CD8-positive, alpha-beta T cell (primary cell): ENCODE measurements at regions of chr7 and their contacts with region 1.

Region 1: GRCh38 chr7:150898475-150899011 is 46.2 kb downstream of the AOC1 start:
- DNase-seq: peak; percentile 60 to 90 (median 79)
- ATAC-seq: peak; percentile 69
- H3K4me3 ChIP-seq: no peak overlapping the region
- H3K4me3 Mint-ChIP-seq: no peak overlapping the region
- H3K27ac ChIP-seq: no peak overlapping the region
- H3K27ac Mint-ChIP-seq: no peak overlapping the region
- H3K4me1 ChIP-seq: peaks cover 7% of the 10 kb centered on the region
- H3K4me1 Mint-ChIP-seq: peaks cover 9% of the 10 kb centered on the region
- H3K27me3 ChIP-seq: peaks cover 0 to 4% of the 10 kb centered on the region in 2 experiments
- H3K27me3 Mint-ChIP-seq: peaks cover 61% of the 10 kb centered on the region
- CTCF ChIP-seq: peak; percentile 92

Region 2: DNA sequence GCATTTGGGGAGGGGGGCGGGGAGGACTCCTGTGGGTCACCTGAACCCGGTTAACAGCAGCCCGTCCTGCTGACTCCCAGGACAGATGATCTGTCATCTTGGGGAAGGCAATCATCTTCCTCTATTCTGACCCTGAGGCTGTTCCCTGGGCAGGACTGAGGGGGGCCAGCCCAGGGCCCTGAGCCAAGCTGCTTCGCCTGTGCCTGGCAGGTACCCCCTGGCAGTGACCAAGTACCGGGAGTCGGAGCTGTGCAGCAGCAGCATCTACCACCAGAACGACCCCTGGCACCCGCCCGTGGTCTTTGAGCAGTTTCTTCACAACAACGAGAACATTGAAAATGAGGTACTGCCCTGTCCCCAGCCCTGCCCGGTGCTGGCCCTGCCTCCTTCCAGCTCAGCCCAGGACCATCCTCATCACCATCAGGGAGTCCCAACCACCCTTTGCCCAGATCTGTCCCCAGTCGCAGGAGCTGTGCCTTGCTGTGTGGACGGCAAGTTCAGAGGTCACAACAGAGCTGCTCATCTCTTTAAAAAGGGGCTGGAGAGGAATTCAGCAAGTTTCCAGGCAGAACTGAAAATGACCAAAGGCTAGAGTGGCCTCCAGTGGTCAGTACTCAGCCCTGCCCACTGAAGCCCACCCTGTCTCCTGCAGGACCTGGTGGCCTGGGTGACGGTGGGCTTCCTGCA is 38.1 kb before region 1 on chr7:
- CTCF ChIA-PET with region 1: no interaction called
- POLR2A ChIA-PET with region 1: no interaction called
- intact Hi-C with region 1: no loop called
- DNase-seq: peak in 2 of 9 experiments; percentile 5 to 41
- ATAC-seq: no peak
- H3K4me3 ChIP-seq: no peak overlapping the region
- H3K4me3 Mint-ChIP-seq: no peak overlapping the region
- H3K27ac ChIP-seq: no peak overlapping the region
- H3K27ac Mint-ChIP-seq: no peak overlapping the region
- H3K4me1 ChIP-seq: no peaks in the 10 kb centered on the region
- H3K4me1 Mint-ChIP-seq: no peaks in the 10 kb centered on the region
- H3K27me3 ChIP-seq: no peaks in the 10 kb centered on the region
- H3K27me3 Mint-ChIP-seq: peaks cover 14% of the 10 kb centered on the region
- CTCF ChIP-seq: no peak

Region 3: DNA sequence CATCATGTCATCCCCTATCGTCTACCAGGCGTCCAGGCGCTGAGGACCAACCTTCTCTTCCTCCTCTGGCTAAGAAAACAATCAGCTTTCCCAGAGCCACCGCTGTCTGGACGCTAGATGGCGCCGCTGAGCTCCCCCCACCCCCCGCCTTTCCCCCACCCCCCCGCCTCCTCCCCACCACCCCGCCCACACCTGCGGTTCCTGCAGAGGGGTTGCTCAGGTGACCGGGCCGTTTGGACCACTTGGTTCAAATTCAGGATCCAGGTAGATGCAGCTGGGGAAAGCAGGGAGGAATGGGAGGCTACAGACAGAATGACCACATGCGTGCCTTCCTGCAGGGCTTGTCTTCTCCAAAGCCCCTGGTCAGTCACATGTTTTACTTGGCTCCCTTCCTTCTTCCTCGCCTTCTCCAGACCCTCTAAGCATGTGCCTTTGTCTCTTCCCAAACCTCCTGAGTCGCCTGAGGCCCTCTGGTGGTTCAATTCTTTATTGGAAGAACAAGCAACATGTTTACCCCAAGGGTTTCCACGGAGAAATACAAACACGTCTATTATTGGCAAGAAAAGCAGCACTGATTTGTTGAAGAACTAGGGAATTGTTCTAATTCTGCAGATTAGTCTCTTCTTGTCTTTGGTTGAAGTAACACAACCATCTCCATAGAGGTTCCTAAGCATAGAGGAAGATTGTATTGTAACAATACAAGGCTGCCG is 21.6 kb before region 1 on chr7:
- CTCF ChIA-PET with region 1: interaction called, 34 read pairs
- POLR2A ChIA-PET with region 1: no interaction called
- intact Hi-C with region 1: no loop called
- DNase-seq: peak in 8 of 9 experiments; percentile 15 to 74 (median 52)
- ATAC-seq: peak; percentile 58
- H3K4me3 ChIP-seq: no peak overlapping the region
- H3K4me3 Mint-ChIP-seq: peak overlapping the region; percentile 19
- H3K27ac ChIP-seq: no peak overlapping the region
- H3K27ac Mint-ChIP-seq: peak overlapping the region; percentile 23
- H3K4me1 ChIP-seq: peaks cover 18% of the 10 kb centered on the region
- H3K4me1 Mint-ChIP-seq: peaks cover 16% of the 10 kb centered on the region
- H3K27me3 ChIP-seq: no peaks in the 10 kb centered on the region
- H3K27me3 Mint-ChIP-seq: peaks cover 6% of the 10 kb centered on the region
- CTCF ChIP-seq: no peak

Region 4: GRCh38 chr7:150916670-150917069 is 18.1 kb after region 1 on chr7:
- CTCF ChIA-PET with region 1: interaction called, 26 read pairs
- POLR2A ChIA-PET with region 1: no interaction called
- intact Hi-C with region 1: no loop called
- DNase-seq: no peak
- ATAC-seq: no peak
- H3K4me3 ChIP-seq: no peak overlapping the region
- H3K4me3 Mint-ChIP-seq: no peak overlapping the region
- H3K27ac ChIP-seq: no peak overlapping the region
- H3K27ac Mint-ChIP-seq: no peak overlapping the region
- H3K4me1 ChIP-seq: no peaks in the 10 kb centered on the region
- H3K4me1 Mint-ChIP-seq: no peaks in the 10 kb centered on the region
- H3K27me3 ChIP-seq: no peaks in the 10 kb centered on the region
- H3K27me3 Mint-ChIP-seq: peaks cover 19% of the 10 kb centered on the region
- CTCF ChIP-seq: no peak

Region 5: GRCh38 chr7:150928541-150928940 is 30.0 kb after region 1 on chr7:
- CTCF ChIA-PET with region 1: interaction called, 22 read pairs
- POLR2A ChIA-PET with region 1: no interaction called
- intact Hi-C with region 1: no loop called
- DNase-seq: no peak
- ATAC-seq: no peak
- H3K4me3 ChIP-seq: no peak overlapping the region
- H3K4me3 Mint-ChIP-seq: no peak overlapping the region
- H3K27ac ChIP-seq: no peak overlapping the region
- H3K27ac Mint-ChIP-seq: no peak overlapping the region
- H3K4me1 ChIP-seq: peaks cover 19% of the 10 kb centered on the region
- H3K4me1 Mint-ChIP-seq: peaks cover 19% of the 10 kb centered on the region
- H3K27me3 ChIP-seq: no peaks in the 10 kb centered on the region
- H3K27me3 Mint-ChIP-seq: peaks cover 2% of the 10 kb centered on the region
- CTCF ChIP-seq: no peak

Region 6: DNA sequence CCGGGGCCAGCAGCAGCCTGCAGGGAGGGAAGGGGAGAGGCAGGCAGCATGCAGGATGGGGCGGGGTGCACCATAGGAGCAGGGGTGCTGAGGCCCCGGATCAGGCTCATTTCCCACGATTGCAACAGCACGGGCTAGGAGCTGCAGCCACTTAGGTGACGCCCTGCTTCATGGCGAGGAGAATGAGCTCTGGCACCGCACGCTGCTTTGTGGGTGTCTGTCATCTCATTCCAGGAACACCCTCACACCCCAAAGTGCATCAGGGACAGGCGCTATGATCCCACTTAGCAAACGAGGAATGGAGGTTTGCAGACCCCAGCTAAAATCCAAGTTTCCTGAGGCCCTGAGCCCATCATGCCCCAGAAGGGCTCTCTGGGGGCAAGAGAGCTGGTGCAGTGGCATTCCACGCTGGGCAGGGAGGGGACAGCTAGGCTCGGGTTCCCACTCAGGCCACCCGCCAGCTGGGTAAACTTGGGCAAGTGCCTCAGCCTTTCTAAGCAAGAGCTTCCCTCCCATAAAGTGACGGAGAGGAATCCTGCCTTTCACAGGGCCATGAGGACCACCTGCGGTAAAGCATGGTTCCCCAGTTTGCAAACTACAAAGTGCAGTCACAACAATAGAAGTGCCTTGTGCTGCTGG is 70.3 kb after region 1 on chr7:
- CTCF ChIA-PET with region 1: interaction called, 11 read pairs
- POLR2A ChIA-PET with region 1: no interaction called
- intact Hi-C with region 1: no loop called
- DNase-seq: peak in 1 of 9 experiments; percentile 9
- ATAC-seq: no peak
- H3K4me3 ChIP-seq: no peak overlapping the region
- H3K4me3 Mint-ChIP-seq: no peak overlapping the region
- H3K27ac ChIP-seq: no peak overlapping the region
- H3K27ac Mint-ChIP-seq: no peak overlapping the region
- H3K4me1 ChIP-seq: peaks cover 6% of the 10 kb centered on the region
- H3K4me1 Mint-ChIP-seq: peaks cover 10% of the 10 kb centered on the region
- H3K27me3 ChIP-seq: no peaks in the 10 kb centered on the region
- H3K27me3 Mint-ChIP-seq: no peaks in the 10 kb centered on the region
- CTCF ChIP-seq: no peak

Region 7: GRCh38 chr7:151008511-151009323 is 110.2 kb after region 1 on chr7:
- CTCF ChIA-PET with region 1: interaction called, 15 read pairs
- POLR2A ChIA-PET with region 1: no interaction called
- intact Hi-C with region 1: no loop called
- DNase-seq: peak; percentile 56 to 89 (median 78)
- ATAC-seq: peak; percentile 47
- H3K4me3 ChIP-seq: peak overlapping the region; percentile 31 to 46
- H3K4me3 Mint-ChIP-seq: peak overlapping the region; percentile 82
- H3K27ac ChIP-seq: peak overlapping the region; percentile 40 to 68
- H3K27ac Mint-ChIP-seq: peak overlapping the region; percentile 90
- H3K4me1 ChIP-seq: peaks cover 68% of the 10 kb centered on the region
- H3K4me1 Mint-ChIP-seq: peaks cover 61% of the 10 kb centered on the region
- H3K27me3 ChIP-seq: no peaks in the 10 kb centered on the region
- H3K27me3 Mint-ChIP-seq: no peaks in the 10 kb centered on the region
- CTCF ChIP-seq: peak; percentile 68

Region 8: GRCh38 chr7:151095123-151095797 is 196.7 kb after region 1 on chr7:
- CTCF ChIA-PET with region 1: interaction called, 3 read pairs
- POLR2A ChIA-PET with region 1: no interaction called
- intact Hi-C with region 1: loop called in 1 of 2 experiments (anchors 5 kb)
- DNase-seq: peak in 1 of 9 experiments; percentile 14
- ATAC-seq: no peak
- H3K4me3 ChIP-seq: no peak overlapping the region
- H3K4me3 Mint-ChIP-seq: no peak overlapping the region
- H3K27ac ChIP-seq: no peak overlapping the region
- H3K27ac Mint-ChIP-seq: no peak overlapping the region
- H3K4me1 ChIP-seq: no peaks in the 10 kb centered on the region
- H3K4me1 Mint-ChIP-seq: no peaks in the 10 kb centered on the region
- H3K27me3 ChIP-seq: no peaks in the 10 kb centered on the region
- H3K27me3 Mint-ChIP-seq: peaks cover 4% of the 10 kb centered on the region
- CTCF ChIP-seq: no peak